ENCODE measurements at regions of chr11 and their contacts with region 1.

Region 1: DNA sequence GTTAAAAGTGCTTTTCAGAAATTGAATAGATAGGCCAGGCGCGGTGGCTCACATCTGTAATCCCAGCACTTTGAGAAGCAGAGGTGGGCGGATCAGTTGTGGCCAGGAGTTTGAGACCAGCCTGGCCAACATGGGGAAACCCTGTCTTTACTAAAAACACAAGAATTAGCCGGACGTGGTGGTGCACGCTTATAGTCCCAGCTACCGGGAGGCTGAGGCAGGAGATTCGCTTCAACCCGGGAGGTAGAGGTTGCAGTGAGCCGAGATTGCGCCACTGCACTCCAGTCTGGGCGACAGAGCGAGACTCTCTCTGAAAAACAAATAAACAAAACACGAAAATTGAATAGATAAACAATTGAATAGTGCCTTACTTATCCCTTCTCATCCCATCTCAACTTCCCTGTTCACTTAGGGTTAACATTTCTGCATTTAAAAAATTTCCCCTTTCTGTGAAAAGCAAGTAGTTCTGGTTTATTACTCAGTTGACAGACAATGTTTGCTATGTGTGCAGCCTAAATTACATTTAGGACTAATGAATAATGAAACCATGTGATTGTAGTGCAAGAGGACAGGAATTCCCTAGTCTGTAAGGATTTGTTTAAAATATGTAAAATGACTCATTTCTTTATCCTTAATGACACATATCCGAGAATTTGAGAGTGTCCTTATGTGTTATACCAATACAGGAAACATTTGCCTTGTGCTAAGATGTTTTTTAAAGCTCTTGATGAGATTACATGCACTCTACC is 6.0 kb downstream of the RNF169 start:
- DNase-seq: peak; percentile 32
- H3K4me3 Mint-ChIP-seq: no peak overlapping the region
- H3K27ac Mint-ChIP-seq: no peak overlapping the region
- H3K4me1 Mint-ChIP-seq: peaks cover 37% of the 10 kb centered on the region
- H3K27me3 Mint-ChIP-seq: no peaks in the 10 kb centered on the region

Region 2: GRCh38 chr11:74739546-74740270 is 15.0 kb before region 1 on chr11:
- CTCF ChIA-PET with region 1: interaction called, 23 read pairs
- POLR2A ChIA-PET with region 1: no interaction called
- intact Hi-C with region 1: no loop called
- DNase-seq: peak; percentile 57
- H3K4me3 Mint-ChIP-seq: no peak overlapping the region
- H3K27ac Mint-ChIP-seq: no peak overlapping the region
- H3K4me1 Mint-ChIP-seq: peaks cover 12% of the 10 kb centered on the region
- H3K27me3 Mint-ChIP-seq: peaks cover 15% of the 10 kb centered on the region

Region 3: DNA sequence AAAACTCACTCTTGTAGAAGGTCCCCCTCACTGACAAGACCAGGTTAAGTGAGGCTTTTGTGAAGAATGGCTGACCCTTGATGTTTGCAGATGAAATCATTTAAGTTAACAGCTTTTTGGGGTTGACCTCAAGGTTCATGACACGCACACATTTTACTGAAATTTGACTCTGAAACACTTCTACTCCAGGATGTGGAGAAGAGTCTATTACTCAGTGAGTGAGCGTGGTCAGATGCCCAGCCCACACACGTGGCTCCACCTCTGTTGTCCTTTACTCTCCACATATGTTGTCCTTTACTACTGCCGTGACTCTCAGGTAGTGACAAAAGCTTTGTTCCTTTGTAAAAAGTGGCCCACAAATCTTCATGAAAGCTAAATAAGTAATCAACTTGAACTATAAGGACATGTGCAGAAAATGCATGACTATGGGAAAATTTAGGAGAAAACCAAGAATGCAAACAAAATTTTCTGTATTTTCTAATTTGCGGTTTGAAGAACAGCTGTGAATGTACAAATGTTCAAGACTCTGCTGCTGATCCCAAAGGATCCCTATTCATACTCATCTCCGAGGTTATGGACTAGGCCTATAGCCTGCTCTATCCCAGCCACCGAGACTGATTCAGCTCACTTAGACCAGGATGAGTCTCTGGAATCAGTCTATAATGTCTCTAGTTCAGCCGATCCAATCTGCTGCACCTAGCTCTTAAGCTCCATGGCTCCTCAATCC is 171.8 kb after region 1 on chr11:
- CTCF ChIA-PET with region 1: no interaction called
- POLR2A ChIA-PET with region 1: no interaction called
- intact Hi-C with region 1: no loop called
- DNase-seq: peak; percentile 71
- H3K4me3 Mint-ChIP-seq: no peak overlapping the region
- H3K27ac Mint-ChIP-seq: no peak overlapping the region
- H3K4me1 Mint-ChIP-seq: peaks cover 8% of the 10 kb centered on the region
- H3K27me3 Mint-ChIP-seq: no peaks in the 10 kb centered on the region

Measured in activated CD4-positive, alpha-beta memory T cell treated with anti-CD3 and anti-CD28 coated beads for 36 hours (primary cell).